Head of caudate nucleus (tissue), 42 donors: ENCODE measurements at regions of chr18 and their contacts with region 1.

Region 1: GRCh38 chr18:12934454-12935071 is 13.2 kb upstream of the SEH1L start:
- DNase-seq: peak; percentile 66 to 93 (median 87)

Region 2: GRCh38 chr18:12726774-12727550 is 207.6 kb before region 1 on chr18:
- intact Hi-C with region 1: loop called (anchors 5 kb)
- DNase-seq: peak in 39 of 42 donors; percentile 15 to 93 (median 72)

Region 3: GRCh38 chr18:12744103-12744502 is 190.5 kb before region 1 on chr18:
- intact Hi-C with region 1: loop called (anchors 5 kb)
- DNase-seq: peak in 1 of 42 donors; percentile 3